Head of caudate nucleus (tissue), 42 donors: ENCODE measurements at regions of chr5 and their contacts with region 1.

Region 1: GRCh38 chr5:76867827-76868693 is 18.2 kb downstream of the S100Z start:
- DNase-seq: peak in 41 of 42 donors; percentile 13 to 88 (median 70)

Region 2: DNA sequence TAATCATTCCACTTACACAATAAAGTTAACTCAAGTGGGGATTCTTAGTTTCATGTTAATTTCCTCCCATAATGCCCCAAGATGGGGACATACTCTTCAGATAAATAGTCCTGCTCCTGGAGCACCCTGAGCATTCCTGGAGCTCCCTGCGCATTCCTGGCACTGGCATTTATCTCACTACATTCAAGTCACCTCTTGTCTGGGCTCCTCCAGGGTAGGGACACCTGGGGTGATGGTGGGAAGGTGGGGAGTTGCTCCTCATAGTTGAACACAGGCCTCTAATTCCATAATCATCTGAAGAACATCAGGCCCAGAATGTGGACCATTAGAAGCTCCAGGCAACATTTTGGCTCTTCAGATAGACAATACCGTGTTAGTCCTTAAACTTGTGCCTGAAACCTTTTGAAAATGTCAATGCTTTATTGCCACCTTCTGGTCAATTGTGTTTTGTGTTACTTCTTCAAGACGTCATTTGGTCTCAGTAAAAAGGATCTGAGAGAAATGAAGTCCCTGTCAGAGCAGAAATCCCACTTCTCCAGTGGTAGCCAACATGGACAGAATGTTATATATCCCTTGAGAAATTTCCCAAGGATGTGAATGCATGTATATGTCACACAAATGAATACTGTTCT is 148.0 kb after region 1 on chr5:
- intact Hi-C with region 1: loop called (anchors 2 kb)
- DNase-seq: peak in 2 of 42 donors; percentile 20 to 51

Region 3: GRCh38 chr5:77218263-77218662 is 350.2 kb after region 1 on chr5:
- intact Hi-C with region 1: no loop called
- DNase-seq: peak in 1 of 42 donors; percentile 11